ENCODE measurements at regions of chr7 and their contacts with region 1.

Region 1: DNA sequence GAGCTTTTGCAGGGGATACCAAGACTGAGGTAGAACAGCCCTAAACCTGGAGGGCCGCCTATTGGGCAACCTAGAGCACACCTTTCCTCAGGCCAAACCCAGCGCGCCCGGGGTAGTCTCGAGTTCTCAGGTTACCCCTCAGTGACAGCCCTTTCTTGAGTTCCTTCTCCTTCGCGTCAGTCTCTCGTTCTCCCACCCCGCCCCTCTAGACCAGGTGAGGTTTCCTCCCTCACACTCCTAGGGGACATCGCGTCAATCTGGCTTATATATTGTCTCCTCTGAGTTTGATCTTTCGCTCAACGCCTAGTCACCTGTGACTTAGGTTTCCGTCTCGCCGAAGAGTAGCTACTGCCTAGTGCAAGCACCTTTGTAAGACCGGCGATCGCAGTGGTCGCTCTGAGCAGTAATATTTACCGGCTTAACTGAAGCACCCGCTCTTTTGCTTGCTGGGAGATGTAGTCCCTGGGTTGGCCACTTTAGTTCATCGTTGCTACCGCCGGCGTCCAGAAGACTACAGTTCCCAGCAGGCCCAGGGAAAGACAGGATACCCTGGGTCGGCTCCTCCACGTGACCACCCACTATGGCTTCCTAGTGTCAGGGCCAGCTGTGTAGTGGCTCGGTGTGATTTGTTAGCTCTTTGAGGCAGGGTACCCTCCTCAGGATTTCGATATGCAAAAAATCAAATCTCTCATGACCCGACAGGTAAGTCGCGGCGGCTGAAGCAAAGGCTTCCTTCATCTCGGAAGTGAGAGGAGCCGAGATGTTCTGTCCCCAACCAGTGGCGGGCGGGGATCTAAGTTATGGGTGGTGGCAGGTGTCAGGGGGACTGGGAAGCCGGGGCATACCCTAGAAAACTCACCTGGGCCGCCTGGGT is at the start of gene VPS50:
- DNase-seq: peak; percentile 96
- H3K4me3 Mint-ChIP-seq: peak within 1 kb of the TSS; percentile 96
- H3K27ac Mint-ChIP-seq: peak within 1 kb of the TSS; percentile 83
- H3K4me1 Mint-ChIP-seq: peaks cover 10% of the 10 kb centered on the region
- H3K27me3 Mint-ChIP-seq: no peaks in the 10 kb centered on the region
- total RNA-seq, gene VPS50: 15.0 to 15.8 TPM

Region 2: GRCh38 chr7:91880413-91881241 is 1351.4 kb before region 1 on chr7 and contains the start of gene MTERF1:
- CTCF ChIA-PET with region 1: no interaction called
- intact Hi-C with region 1: loop called (anchors 5 kb)
- DNase-seq: peak; percentile 96
- H3K4me3 Mint-ChIP-seq: peak within 1 kb of the TSS; percentile 95
- H3K27ac Mint-ChIP-seq: peak within 1 kb of the TSS; percentile 94
- H3K4me1 Mint-ChIP-seq: peaks cover 21% of the 10 kb centered on the region
- H3K27me3 Mint-ChIP-seq: no peaks in the 10 kb centered on the region
- total RNA-seq, gene MTERF1: 13.7 to 16.7 TPM

Region 3: GRCh38 chr7:92245487-92246362 is 986.3 kb before region 1 on chr7 and contains the starts of genes ANKIB1 and KRIT1:
- CTCF ChIA-PET with region 1: no interaction called
- intact Hi-C with region 1: loop called (anchors 10 kb)
- DNase-seq: peak; percentile 91
- H3K4me3 Mint-ChIP-seq: peak within 1 kb of the TSS; percentile 92
- H3K27ac Mint-ChIP-seq: peak within 1 kb of the TSS; percentile 95
- H3K4me1 Mint-ChIP-seq: peaks cover 33% of the 10 kb centered on the region
- H3K27me3 Mint-ChIP-seq: no peaks in the 10 kb centered on the region
- total RNA-seq, gene ANKIB1: 37.9 to 38.4 TPM
- total RNA-seq, gene KRIT1: 21.5 to 27.9 TPM

Region 4: GRCh38 chr7:92621026-92621540 is 611.0 kb before region 1 on chr7:
- CTCF ChIA-PET with region 1: no interaction called
- intact Hi-C with region 1: loop called (anchors 1 kb)
- DNase-seq: peak; percentile 93
- H3K4me3 Mint-ChIP-seq: peak overlapping the region; percentile 4
- H3K27ac Mint-ChIP-seq: peak overlapping the region; percentile 80
- H3K4me1 Mint-ChIP-seq: peaks cover 46% of the 10 kb centered on the region
- H3K27me3 Mint-ChIP-seq: no peaks in the 10 kb centered on the region

Region 5: DNA sequence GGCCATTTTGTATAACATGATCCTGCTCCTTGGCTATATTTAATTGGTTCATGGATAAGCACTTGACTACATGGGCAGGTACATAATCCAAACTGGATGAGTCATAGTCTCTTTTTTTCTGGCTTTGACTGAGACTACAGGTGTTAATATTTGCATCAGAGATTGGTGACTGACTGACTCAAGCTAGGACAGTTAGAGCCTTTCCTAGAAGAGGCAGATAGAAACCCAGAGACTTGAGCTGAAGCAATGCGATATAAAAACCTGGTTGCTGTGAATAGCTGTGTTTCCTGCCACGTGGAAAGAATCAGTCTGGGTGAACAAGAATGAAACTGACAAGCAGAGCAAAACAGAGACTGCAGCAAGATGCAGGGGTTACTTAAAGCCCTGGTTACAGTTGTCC is 195.2 kb before region 1 on chr7:
- CTCF ChIA-PET with region 1: no interaction called
- intact Hi-C with region 1: loop called (anchors 1 kb)
- DNase-seq: peak; percentile 74
- H3K4me3 Mint-ChIP-seq: no peak overlapping the region
- H3K27ac Mint-ChIP-seq: peak overlapping the region; percentile 59
- H3K4me1 Mint-ChIP-seq: peaks cover 22% of the 10 kb centered on the region
- H3K27me3 Mint-ChIP-seq: no peaks in the 10 kb centered on the region

Region 6: GRCh38 chr7:93178212-93178611 is 53.8 kb before region 1 on chr7:
- CTCF ChIA-PET with region 1: interaction called, 10 read pairs
- intact Hi-C with region 1: loop called (anchors 1 kb)
- DNase-seq: no peak
- H3K4me3 Mint-ChIP-seq: no peak overlapping the region
- H3K27ac Mint-ChIP-seq: no peak overlapping the region
- H3K4me1 Mint-ChIP-seq: no peaks in the 10 kb centered on the region
- H3K27me3 Mint-ChIP-seq: peaks cover 24% of the 10 kb centered on the region

Region 7: GRCh38 chr7:94657771-94658693 is 1426.0 kb after region 1 on chr7:
- CTCF ChIA-PET with region 1: no interaction called
- intact Hi-C with region 1: loop called (anchors 1 kb)
- DNase-seq: peak; percentile 95
- H3K4me3 Mint-ChIP-seq: peak overlapping the region; percentile 84
- H3K27ac Mint-ChIP-seq: no peak overlapping the region
- H3K4me1 Mint-ChIP-seq: peaks cover 13% of the 10 kb centered on the region
- H3K27me3 Mint-ChIP-seq: peaks cover 24% of the 10 kb centered on the region